Activated T-helper 1 cell treated with anti-CD3 and anti-CD28 coated beads, Interleukin-12 subunit alpha, Interleukin-12 subunit beta, Interleukin-2, Interleukin-4 antibody, amounts not matched to agents 30 ng/mL and 10 ng/mL and 1 ng/mL, durations not matched to agents 14 hours and 24 hours and 36 hours (primary cell): ENCODE measurements at regions of chr2 and their contacts with region 1.

Region 1: DNA sequence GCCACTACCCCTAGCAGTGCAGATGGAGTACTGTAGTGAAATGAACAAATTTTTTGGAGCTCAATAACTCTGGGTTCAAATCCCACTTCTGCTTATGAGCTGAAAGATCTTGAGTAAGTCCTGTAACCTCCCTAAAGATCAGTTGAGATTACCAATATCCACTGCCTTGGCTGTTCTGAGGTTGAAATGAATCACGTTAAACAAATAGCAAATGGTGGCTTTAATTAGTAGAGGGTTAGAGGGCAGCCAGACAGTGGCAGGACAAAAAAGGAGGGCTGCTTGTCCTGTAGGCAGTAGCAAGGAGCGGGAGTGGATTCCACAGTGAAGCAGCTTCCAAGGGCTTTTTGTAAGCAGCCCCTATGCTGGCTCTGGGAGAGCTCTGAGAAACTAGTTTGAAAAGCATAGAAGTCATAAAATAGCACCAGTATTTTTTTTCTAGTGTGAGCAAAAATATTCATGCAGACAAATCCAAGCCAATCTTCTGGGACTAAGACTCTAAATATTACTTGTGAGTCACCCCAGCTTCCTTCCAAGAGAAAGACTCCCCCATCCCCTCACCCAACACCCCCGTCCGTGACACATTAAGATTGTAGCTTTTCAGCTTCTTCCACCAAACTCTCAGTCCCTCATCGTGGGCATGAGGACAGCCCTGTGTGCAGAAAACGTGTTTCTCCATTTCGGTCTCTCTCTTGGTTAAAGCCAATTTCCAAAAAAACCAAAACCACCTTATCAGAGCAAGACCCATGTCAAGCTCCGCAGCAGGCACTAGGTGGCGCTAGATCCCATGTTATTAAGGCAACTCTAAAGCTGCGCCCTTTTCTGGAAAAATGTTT is 123.5 kb upstream of the LGALSL start:
- DNase-seq: peak; percentile 60
- H3K4me3 Mint-ChIP-seq: peak overlapping the region; percentile 73
- H3K27ac Mint-ChIP-seq: peak overlapping the region; percentile 66
- H3K4me1 Mint-ChIP-seq: peaks cover 60% of the 10 kb centered on the region
- H3K27me3 Mint-ChIP-seq: peaks cover 10% of the 10 kb centered on the region

Region 2: GRCh38 chr2:63841254-63842022 is 489.1 kb before region 1 on chr2 and contains the start of gene UGP2:
- intact Hi-C with region 1: loop called (anchors 1 kb)
- DNase-seq: peak; percentile 83
- H3K4me3 Mint-ChIP-seq: peak within 1 kb of the TSS; percentile 99
- H3K27ac Mint-ChIP-seq: peak within 1 kb of the TSS; percentile 99
- H3K4me1 Mint-ChIP-seq: peaks cover 47% of the 10 kb centered on the region
- H3K27me3 Mint-ChIP-seq: no peaks in the 10 kb centered on the region
- total RNA-seq, gene UGP2: 60.3 and 65.9 TPM in 2 replicates

Region 3: DNA sequence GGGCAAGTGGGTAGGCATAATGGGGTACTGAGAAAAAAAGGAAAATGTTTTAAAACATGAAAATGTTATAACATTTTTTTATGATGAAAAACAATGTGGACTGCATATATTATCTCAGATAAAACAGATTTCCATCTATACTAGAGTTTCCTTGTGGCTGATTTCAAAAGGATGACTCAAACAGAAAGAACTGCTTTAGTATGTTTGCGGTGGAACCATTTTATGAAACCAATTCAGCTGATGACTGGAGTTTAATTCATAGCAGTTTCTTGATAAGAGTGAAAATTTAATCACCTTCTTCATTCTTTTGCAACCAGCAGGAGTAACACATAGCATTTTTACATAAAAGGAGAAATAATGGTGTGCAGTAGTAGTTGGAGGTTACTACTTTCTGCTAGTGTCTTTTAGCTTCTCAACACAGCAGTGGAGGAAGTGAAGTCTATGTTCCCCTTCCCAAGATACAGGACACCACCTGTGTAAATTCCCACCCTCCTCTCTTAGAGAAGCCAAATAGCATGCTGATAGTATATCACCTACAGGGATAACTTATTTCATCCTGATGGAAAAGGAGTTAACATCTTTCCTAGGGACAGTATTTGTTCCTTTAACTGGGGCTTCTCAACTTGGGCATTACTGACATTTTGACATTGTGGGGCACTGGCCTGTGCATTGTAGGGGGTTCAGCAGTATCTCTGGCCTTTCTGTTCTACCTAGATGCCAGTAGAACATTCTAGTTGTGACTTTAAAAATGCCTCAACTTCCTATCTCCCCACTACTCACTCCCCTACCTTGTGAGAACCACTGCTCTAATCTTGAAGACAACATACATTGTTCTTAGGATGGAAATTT is 216.2 kb before region 1 on chr2:
- intact Hi-C with region 1: loop called (anchors 1 kb)
- DNase-seq: no peak
- H3K4me3 Mint-ChIP-seq: peak overlapping the region; percentile 17
- H3K27ac Mint-ChIP-seq: peak overlapping the region; percentile 59
- H3K4me1 Mint-ChIP-seq: peaks cover 73% of the 10 kb centered on the region
- H3K27me3 Mint-ChIP-seq: no peaks in the 10 kb centered on the region

Region 4: DNA sequence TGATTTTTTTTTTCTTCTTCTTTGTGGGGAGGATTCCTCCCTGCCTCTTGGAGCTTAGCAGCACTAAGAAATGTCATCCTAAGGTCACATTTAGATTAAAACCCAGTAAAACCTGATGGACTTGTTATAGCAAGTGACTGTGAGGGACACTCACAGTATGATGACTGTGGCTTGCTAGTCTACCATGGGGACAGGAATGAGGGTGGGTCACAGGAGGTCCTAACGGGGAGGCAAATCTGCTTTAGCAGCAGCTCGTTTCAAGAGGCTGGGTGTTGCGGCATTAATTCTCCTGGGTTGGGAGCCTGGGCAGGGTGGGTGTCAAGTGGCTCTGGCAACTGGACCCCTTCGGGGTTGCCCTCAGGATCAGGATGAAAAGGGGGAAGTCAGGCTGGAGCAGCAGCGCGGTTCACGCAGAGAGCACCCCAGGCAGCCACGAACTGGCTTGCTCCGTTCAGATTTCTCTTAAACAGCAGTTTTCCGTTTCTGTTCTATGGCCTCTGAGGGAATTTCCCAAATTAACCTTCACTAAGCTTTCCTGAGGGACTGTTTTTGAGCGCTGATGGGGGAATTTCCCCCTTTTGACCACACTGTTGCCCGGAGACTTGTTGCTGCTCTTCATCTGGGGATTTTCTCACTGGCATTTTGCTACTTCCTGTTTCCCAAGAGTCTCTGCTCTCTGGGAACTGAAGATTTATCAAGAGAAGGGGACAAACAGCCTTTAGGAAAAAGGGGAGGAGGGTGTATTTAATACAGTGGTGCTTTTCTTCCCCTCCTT is 126.5 kb before region 1 on chr2:
- intact Hi-C with region 1: loop called (anchors 1 kb)
- DNase-seq: peak; percentile 49
- H3K4me3 Mint-ChIP-seq: peak overlapping the region; percentile 76
- H3K27ac Mint-ChIP-seq: peak overlapping the region; percentile 91
- H3K4me1 Mint-ChIP-seq: peaks cover 84% of the 10 kb centered on the region
- H3K27me3 Mint-ChIP-seq: no peaks in the 10 kb centered on the region

Region 5: DNA sequence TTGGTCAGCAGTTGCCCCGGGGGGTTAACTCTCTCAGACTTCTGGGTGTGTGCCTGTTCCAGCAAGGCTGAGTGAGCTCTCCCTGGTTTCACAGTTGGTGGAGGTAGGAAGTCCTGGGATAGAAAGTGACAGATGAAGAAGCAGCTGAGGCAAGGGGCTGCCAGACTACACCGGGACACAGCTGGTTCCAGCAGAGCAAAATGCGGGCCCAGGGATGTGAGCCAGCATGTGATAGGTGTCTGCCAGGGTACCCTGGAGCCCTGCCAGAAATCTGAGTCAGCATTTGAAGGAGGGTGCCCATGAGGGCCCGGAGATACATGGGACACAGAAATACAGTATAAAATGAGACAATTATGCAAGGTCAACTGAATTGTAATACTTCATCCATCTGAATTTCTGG is 44.2 kb after region 1 on chr2:
- intact Hi-C with region 1: no loop called
- DNase-seq: no peak
- H3K4me3 Mint-ChIP-seq: no peak overlapping the region
- H3K27ac Mint-ChIP-seq: no peak overlapping the region
- H3K4me1 Mint-ChIP-seq: no peaks in the 10 kb centered on the region
- H3K27me3 Mint-ChIP-seq: peaks cover 7% of the 10 kb centered on the region

Region 6: GRCh38 chr2:64488050-64488974 is 157.8 kb after region 1 on chr2:
- intact Hi-C with region 1: loop called (anchors 1 kb)
- DNase-seq: peak; percentile 53
- H3K4me3 Mint-ChIP-seq: no peak overlapping the region
- H3K27ac Mint-ChIP-seq: no peak overlapping the region
- H3K4me1 Mint-ChIP-seq: peaks cover 8% of the 10 kb centered on the region
- H3K27me3 Mint-ChIP-seq: peaks cover 24% of the 10 kb centered on the region

Region 7: DNA sequence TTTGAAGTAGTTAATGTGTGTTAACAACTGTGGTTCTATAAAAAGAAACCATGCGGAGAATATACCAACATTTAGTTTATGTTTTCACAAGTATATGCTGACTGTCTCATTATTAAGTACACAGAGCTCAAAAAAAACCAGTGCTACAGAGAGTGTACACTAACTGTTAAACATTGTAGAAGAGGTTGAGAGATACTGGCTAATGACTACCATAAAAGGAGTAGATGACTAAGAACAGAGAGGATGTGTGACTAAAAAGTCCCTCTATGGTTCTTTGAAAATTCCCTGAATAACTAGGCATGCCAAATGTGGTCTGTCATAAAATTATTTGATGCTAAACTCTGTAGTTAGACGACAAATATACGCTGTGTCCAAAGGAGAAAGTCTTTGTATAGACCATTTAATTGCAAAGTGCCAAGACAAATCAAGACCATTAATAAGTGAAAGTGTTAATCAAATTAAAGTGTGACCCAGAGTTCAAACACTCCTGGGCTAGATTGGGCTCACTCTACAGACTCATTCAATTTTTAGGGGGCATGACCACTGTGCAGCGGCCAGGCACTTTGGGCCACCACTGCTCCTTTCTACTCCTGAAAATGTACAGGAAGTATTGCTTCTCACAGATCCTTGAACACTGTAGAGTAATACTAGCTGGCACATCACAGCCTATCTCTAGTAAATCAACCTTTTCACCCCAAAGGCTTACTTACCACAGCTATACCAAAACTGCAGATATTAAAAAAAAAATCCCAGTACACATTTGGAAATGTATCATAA is 368.4 kb after region 1 on chr2:
- intact Hi-C with region 1: loop called (anchors 5 kb)
- DNase-seq: no peak
- H3K4me3 Mint-ChIP-seq: peak overlapping the region; percentile 53
- H3K27ac Mint-ChIP-seq: peak overlapping the region; percentile 90
- H3K4me1 Mint-ChIP-seq: peaks cover 60% of the 10 kb centered on the region
- H3K27me3 Mint-ChIP-seq: no peaks in the 10 kb centered on the region

Region 8: GRCh38 chr2:64988420-64989125 is 658.1 kb after region 1 on chr2:
- intact Hi-C with region 1: loop called (anchors 2 kb)
- DNase-seq: peak; percentile 75
- H3K4me3 Mint-ChIP-seq: peak overlapping the region; percentile 88
- H3K27ac Mint-ChIP-seq: peak overlapping the region; percentile 92
- H3K4me1 Mint-ChIP-seq: peaks cover 79% of the 10 kb centered on the region
- H3K27me3 Mint-ChIP-seq: peaks cover 11% of the 10 kb centered on the region